ENCODE measurements at regions of chr12 and their contacts with region 1.

Region 1: DNA sequence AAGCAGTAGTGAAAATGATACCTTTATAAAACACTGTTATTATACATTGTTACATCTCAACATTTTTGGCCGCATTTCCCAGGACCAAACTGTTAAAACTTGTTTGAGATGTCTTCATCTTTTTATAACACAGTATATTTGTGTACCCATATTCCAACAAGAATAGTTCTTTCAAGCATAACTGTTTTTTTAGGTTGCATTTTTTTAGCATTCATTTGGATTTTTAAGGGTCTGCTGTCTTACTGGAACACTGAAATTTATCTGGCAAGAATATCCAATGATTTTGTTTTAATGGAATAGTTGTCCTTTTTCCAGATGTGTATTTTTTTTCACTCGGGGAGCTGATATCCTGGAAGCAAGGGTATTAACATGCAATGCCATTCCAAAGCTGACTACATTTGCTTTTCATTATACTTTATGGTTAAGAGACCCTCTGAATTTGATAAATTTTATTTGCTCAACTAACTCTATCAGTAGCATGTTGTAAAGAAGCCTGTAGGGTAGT is 8.9 kb upstream of the NAV3 start:
- DNase-seq: no peak
- ATAC-seq: no peak
- H3K4me3 ChIP-seq: no peak overlapping the region
- H3K27ac ChIP-seq: no peak overlapping the region
- H3K4me1 ChIP-seq: peaks cover 0 to 10% (median 0%) of the 10 kb centered on the region in 12 donors
- H3K27me3 ChIP-seq: no peaks in the 10 kb centered on the region
- CTCF ChIP-seq: no peak
- POLR2A ChIP-seq: no peak

Region 2: DNA sequence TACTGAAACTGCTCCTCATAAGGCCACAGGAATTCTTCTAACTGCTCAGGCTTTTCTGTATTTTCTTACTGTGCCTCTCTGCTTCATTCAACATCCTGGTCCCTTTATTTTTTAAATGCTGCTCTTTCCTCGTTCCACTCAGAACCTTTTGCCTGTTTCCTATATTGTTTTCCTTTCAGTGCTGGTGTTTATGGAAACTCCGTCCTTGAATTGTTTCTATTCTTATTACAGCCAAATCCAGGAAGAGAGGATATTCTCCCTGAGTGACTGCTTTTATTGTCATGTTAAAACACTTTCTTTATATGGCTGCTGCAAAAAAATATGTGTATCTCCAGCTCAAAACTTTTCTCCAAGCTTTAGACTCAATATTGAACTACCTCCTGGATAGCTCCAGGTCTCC is 583.4 kb before region 1 on chr12:
- intact Hi-C with region 1: no loop called
- DNase-seq: no peak
- ATAC-seq: peak in 1 of 4 donors; percentile 34
- H3K4me3 ChIP-seq: no peak overlapping the region
- H3K27ac ChIP-seq: peak overlapping the region in 1 of 12 donors; percentile 47
- H3K4me1 ChIP-seq: peaks cover 0 to 10% (median 0%) of the 10 kb centered on the region in 12 donors
- H3K27me3 ChIP-seq: no peaks in the 10 kb centered on the region
- CTCF ChIP-seq: no peak
- POLR2A ChIP-seq: no peak

Region 3: GRCh38 chr12:77878901-77879300 is 57.1 kb after region 1 on chr12:
- intact Hi-C with region 1: loop called in 1 of 10 experiments (anchors 10 kb)
- DNase-seq: no peak
- ATAC-seq: no peak
- H3K4me3 ChIP-seq: no peak overlapping the region
- H3K27ac ChIP-seq: no peak overlapping the region
- H3K4me1 ChIP-seq: no peaks in the 10 kb centered on the region
- H3K27me3 ChIP-seq: no peaks in the 10 kb centered on the region
- CTCF ChIP-seq: no peak
- POLR2A ChIP-seq: no peak

Region 4: GRCh38 chr12:77907936-77908335 is 86.2 kb after region 1 on chr12:
- intact Hi-C with region 1: no loop called
- DNase-seq: no peak
- ATAC-seq: no peak
- H3K4me3 ChIP-seq: no peak overlapping the region
- H3K27ac ChIP-seq: no peak overlapping the region
- H3K4me1 ChIP-seq: no peaks in the 10 kb centered on the region
- H3K27me3 ChIP-seq: no peaks in the 10 kb centered on the region
- CTCF ChIP-seq: no peak
- POLR2A ChIP-seq: no peak

Measured in heart left ventricle (tissue), 16 donors.